Activated CD4-positive, alpha-beta T cell treated with anti-CD3 and anti-CD28 coated beads for 36 hours (primary cell): ENCODE measurements at regions of chr6 and their contacts with region 1.

Region 1: GRCh38 chr6:156963712-156964700 is 186.8 kb downstream of the ARID1B start:
- DNase-seq: peak; percentile 74
- ATAC-seq: peak; percentile 93
- H3K4me3 Mint-ChIP-seq: no peak overlapping the region
- H3K27ac Mint-ChIP-seq: peak overlapping the region; percentile 31
- H3K4me1 Mint-ChIP-seq: peaks cover 53% of the 10 kb centered on the region
- H3K27me3 Mint-ChIP-seq: no peaks in the 10 kb centered on the region

Region 2: DNA sequence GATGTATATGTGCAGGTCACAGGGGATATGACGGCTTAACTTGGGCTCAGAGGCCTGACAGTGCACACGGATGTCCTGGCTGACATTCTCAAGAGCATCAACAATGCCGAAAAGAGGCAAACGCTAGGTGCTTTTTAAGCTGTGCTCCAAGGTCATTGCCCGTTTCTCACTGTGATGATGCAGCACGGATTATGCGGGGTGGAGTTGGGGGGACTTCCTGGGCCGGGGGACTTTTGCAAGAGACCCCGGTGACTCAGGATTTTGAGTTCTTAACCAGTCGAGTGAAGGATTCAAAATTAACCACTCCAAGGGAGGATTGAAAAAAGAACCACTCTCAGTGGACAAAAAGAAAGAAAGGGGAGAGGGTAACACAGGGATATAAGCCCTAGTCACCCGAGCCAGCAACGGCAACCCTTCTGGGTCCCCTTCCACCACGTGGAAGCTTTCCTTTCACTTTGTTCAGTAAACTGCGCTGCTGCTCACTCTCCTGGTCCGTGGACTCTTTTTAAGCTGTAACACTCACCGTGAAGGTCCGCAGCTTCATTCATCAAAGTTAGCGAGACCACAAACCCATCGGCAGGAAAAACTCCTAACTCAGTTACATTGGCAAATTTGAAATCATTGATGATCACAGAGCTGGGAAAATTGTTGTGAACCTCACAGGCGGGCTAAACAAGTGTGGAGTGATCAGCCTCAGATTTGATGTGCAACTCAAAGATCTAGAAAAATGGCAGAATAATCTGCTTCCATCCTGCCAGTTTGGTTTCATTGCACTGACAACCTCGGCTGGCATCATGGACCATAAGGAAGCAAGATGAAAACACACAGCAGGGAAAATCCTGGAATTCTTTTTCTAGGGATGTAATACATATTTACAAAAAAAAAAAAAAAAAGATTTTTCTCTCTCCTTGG is 12.5 kb after region 1 on chr6:
- CTCF ChIA-PET with region 1: interaction called, 5 read pairs
- POLR2A ChIA-PET with region 1: no interaction called
- intact Hi-C with region 1: loop called in 1 of 2 experiments (anchors 2 kb)
- DNase-seq: peak; percentile 25
- ATAC-seq: peak; percentile 25
- H3K4me3 Mint-ChIP-seq: peak overlapping the region; percentile 58
- H3K27ac Mint-ChIP-seq: peak overlapping the region; percentile 47
- H3K4me1 Mint-ChIP-seq: peaks cover 86% of the 10 kb centered on the region
- H3K27me3 Mint-ChIP-seq: no peaks in the 10 kb centered on the region

Region 3: GRCh38 chr6:157693867-157694266 is 729.9 kb after region 1 on chr6:
- CTCF ChIA-PET with region 1: no interaction called
- POLR2A ChIA-PET with region 1: no interaction called
- intact Hi-C with region 1: no loop called
- DNase-seq: no peak
- ATAC-seq: no peak
- H3K4me3 Mint-ChIP-seq: no peak overlapping the region
- H3K27ac Mint-ChIP-seq: no peak overlapping the region
- H3K4me1 Mint-ChIP-seq: no peaks in the 10 kb centered on the region
- H3K27me3 Mint-ChIP-seq: peaks cover 2% of the 10 kb centered on the region